ENCODE measurements at regions of chr16 and their contacts with region 1.

Region 1: GRCh38 chr16:84116720-84117493 is at the start of gene MBTPS1:
- DNase-seq: peak; percentile 96 to 99 (median 98)
- ATAC-seq: peak; percentile 85 to 87
- H3K4me3 Mint-ChIP-seq: peak within 1 kb of the TSS; percentile 89 to 98 (median 94)
- H3K27ac Mint-ChIP-seq: peak within 1 kb of the TSS; percentile 93 to 99 (median 96)
- H3K4me1 Mint-ChIP-seq: peaks cover 7 to 38% (median 27%) of the 10 kb centered on the region in 4 donors
- H3K27me3 Mint-ChIP-seq: no peaks in the 10 kb centered on the region
- polyA plus RNA-seq, gene MBTPS1: 50.9 to 71.4 (median 51.2) TPM

Region 2: GRCh38 chr16:82524976-82525375 is 1591.9 kb before region 1 on chr16:
- POLR2A ChIA-PET with region 1: no interaction called
- DNase-seq: no peak
- ATAC-seq: no peak
- H3K4me3 Mint-ChIP-seq: no peak overlapping the region
- H3K27ac Mint-ChIP-seq: no peak overlapping the region
- H3K4me1 Mint-ChIP-seq: no peaks in the 10 kb centered on the region
- H3K27me3 Mint-ChIP-seq: peaks cover 0 to 14% (median 1%) of the 10 kb centered on the region in 5 donors

Region 3: GRCh38 chr16:84072014-84072413 is 44.9 kb before region 1 on chr16:
- POLR2A ChIA-PET with region 1: no interaction called
- DNase-seq: no peak
- ATAC-seq: no peak
- H3K4me3 Mint-ChIP-seq: no peak overlapping the region
- H3K27ac Mint-ChIP-seq: peak overlapping the region in 1 of 10 donors; percentile 52
- H3K4me1 Mint-ChIP-seq: peaks cover 0 to 9% (median 4%) of the 10 kb centered on the region in 4 donors
- H3K27me3 Mint-ChIP-seq: no peaks in the 10 kb centered on the region

Region 4: GRCh38 chr16:84138824-84139627 is 22.1 kb after region 1 on chr16:
- POLR2A ChIA-PET with region 1: interaction called, 15 read pairs
- DNase-seq: no peak
- ATAC-seq: peak; percentile 52 to 67
- H3K4me3 Mint-ChIP-seq: peak overlapping the region in 3 of 10 donors; percentile 5 to 41 (median 27)
- H3K27ac Mint-ChIP-seq: peak overlapping the region in 6 of 10 donors; percentile 0 to 71 (median 64)
- H3K4me1 Mint-ChIP-seq: peaks cover 34 to 67% (median 52%) of the 10 kb centered on the region in 4 donors
- H3K27me3 Mint-ChIP-seq: no peaks in the 10 kb centered on the region

Region 5: DNA sequence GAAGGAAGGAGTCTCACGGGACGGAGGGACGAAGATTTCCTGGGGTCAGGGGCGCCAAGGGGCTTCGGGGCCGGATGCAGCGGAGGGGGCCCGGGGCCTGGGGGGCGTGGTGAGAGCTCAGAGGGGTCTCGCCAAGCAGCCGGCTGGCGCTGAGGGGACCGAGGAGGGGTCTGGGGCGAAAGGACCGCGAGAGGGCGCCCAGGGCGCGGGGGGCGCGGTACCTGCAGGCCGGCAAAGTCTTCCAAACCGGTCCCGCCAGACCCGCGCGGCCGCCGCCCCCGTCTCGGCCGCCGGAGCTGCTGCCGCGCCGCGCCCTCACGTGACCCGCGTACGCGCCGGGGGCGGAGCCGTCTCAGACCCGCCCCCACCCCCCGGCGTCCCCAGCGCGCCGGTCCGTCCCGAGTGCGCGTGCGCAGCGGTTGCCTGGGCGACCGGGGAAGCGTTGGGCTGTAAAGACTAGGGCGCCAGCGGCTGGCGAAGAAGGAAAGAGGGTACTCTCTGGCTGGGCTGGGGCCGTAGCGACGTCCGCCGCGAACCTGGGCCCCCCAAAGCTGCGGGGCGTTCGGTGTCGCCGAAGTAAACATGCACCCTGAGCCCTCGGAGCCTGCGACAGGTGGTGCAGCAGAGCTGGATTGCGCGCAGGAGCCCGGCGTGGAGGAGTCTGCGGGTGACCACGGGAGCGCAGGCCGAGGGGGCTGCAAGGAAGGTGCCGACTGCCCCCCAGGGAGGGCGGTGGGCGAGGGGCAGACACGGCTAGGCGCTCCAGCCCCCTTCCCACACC is 28.1 kb after region 1 on chr16 and contains the starts of genes DNAAF1 and HSDL1:
- POLR2A ChIA-PET with region 1: interaction called, 40 read pairs
- DNase-seq: peak; percentile 90 to 99 (median 95)
- ATAC-seq: peak; percentile 81
- H3K4me3 Mint-ChIP-seq: peak within 1 kb of the TSS; percentile 90 to 99 (median 96)
- H3K27ac Mint-ChIP-seq: peak within 1 kb of the TSS; percentile 75 to 97 (median 93)
- H3K4me1 Mint-ChIP-seq: peaks cover 15 to 32% (median 25%) of the 10 kb centered on the region in 4 donors
- H3K27me3 Mint-ChIP-seq: peaks cover 0 to 3% (median 0%) of the 10 kb centered on the region in 5 donors
- polyA plus RNA-seq, gene DNAAF1: 0.08 to 0.98 TPM in 2 of 3 donors, not detected in the other
- polyA plus RNA-seq, gene HSDL1: 8.4 to 14.7 (median 14.2) TPM

Region 6: GRCh38 chr16:84186685-84187437 is 70.0 kb after region 1 on chr16 and contains the start of gene TAF1C:
- POLR2A ChIA-PET with region 1: interaction called, 15 read pairs
- DNase-seq: peak; percentile 77 to 93 (median 88)
- ATAC-seq: peak; percentile 91 to 92
- H3K4me3 Mint-ChIP-seq: peak within 1 kb of the TSS; percentile 85 to 95 (median 92)
- H3K27ac Mint-ChIP-seq: peak within 1 kb of the TSS; percentile 77 to 97 (median 95)
- H3K4me1 Mint-ChIP-seq: peaks cover 17 to 27% (median 24%) of the 10 kb centered on the region in 4 donors
- H3K27me3 Mint-ChIP-seq: no peaks in the 10 kb centered on the region
- polyA plus RNA-seq, gene TAF1C: 4.2 to 8.3 (median 7.9) TPM

Region 7: DNA sequence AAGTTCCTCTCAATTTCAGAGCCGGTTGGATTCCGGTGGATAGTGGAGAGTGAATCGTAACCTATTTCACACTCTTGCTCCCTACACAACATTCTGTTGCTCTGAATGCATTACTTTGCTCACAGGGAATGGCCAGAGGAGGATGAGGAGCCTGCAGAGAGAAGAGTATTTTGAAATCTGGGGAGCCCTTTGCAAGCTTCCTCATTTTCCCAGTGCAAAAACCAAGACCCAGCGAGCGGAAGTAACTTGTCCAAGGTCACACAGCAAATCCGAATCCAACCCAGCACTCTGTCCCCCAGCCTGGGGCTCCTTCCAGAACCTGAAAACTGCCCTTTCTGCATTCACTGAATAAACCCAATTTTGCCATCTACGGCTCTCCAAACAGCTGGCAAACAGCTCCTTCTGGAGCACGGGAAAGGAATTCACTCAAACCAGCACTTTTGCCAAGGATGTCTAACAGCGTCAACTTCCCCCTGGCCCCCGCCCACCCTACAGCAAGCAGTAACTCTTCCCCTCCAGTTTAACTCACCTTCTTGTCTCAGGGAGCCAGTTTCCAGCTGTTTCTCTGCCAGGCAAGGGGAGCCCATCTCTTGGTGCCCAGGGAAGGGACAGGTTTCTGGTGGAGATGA is 122.3 kb after region 1 on chr16:
- POLR2A ChIA-PET with region 1: no interaction called
- DNase-seq: no peak
- ATAC-seq: no peak
- H3K4me3 Mint-ChIP-seq: no peak overlapping the region
- H3K27ac Mint-ChIP-seq: no peak overlapping the region
- H3K4me1 Mint-ChIP-seq: no peaks in the 10 kb centered on the region
- H3K27me3 Mint-ChIP-seq: peaks cover 17 to 50% (median 31%) of the 10 kb centered on the region in 5 donors